Heart left ventricle (tissue), 16 donors: ENCODE measurements at regions of chr18 and their contacts with region 1.

Region 1: GRCh38 chr18:70956554-70956953 is 667.7 kb downstream of the SOCS6 start:
- DNase-seq: no peak
- ATAC-seq: no peak
- H3K4me3 ChIP-seq: no peak overlapping the region
- H3K27ac ChIP-seq: no peak overlapping the region
- H3K4me1 ChIP-seq: no peaks in the 10 kb centered on the region
- H3K27me3 ChIP-seq: no peaks in the 10 kb centered on the region
- CTCF ChIP-seq: no peak
- POLR2A ChIP-seq: no peak

Region 2: DNA sequence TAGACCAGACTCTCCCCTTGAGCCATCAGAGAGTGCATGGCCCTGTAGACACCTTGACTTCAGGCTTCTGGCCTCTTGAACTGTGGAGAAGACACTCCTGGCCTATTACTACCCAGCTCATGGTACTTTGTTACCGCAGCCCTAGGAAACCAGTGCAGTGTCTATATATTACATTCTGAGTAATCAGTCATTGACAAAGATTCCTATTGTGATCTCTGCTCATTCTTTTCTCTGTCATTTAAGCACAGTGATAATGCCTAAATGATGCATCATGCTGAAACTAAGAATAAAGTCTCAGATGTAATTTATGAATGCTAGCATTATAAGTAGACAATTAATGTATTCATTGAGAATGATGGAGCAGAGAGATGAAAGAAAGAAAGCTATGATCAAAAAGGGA is 64.2 kb before region 1 on chr18:
- intact Hi-C with region 1: loop called in 1 of 10 experiments (anchors 10 kb)
- DNase-seq: no peak
- ATAC-seq: no peak
- H3K4me3 ChIP-seq: no peak overlapping the region
- H3K27ac ChIP-seq: no peak overlapping the region
- H3K4me1 ChIP-seq: no peaks in the 10 kb centered on the region
- H3K27me3 ChIP-seq: no peaks in the 10 kb centered on the region
- CTCF ChIP-seq: no peak
- POLR2A ChIP-seq: no peak